ENCODE measurements at regions of chrX and their contacts with region 1.

Region 1: DNA sequence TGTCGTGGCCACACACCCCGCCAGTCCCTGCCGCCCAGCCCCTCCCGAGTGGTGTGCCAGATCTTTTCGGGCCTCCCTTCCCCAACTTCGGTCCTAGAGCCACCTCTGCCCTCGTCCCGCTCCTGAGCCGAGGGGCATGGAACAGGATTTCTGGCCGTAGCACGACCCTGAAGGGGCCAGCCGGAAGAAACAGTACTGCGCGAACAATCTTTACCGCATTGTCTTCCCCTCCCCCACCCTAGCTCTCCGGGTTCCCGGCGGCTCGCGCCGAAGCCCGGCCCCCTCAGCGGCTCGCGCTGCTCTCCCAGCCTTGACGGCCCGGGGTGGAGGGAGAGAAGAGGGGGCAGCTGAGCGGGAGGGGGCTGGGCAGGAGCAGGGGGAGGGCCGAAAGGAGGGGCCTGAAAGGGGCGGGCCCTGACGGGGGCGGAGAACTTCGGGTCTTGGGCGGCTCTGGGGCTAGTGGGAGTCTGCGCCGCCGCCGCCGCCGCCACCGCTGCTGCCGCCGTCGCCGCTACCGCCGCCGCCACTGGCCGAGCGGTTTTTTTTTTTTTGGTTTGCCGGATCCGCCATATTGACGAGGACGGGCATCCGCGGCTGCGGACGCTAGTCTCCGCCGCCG is at the start of gene USP9X:
- DNase-seq: peak; percentile 32
- ATAC-seq: peak; percentile 83
- H3K4me3 ChIP-seq: peak within 1 kb of the TSS; percentile 65 to 76
- H3K27ac ChIP-seq: peak within 1 kb of the TSS; percentile 81
- H3K4me1 ChIP-seq: peaks cover 9% of the 10 kb centered on the region
- H3K27me3 ChIP-seq: no peaks in the 10 kb centered on the region
- CTCF ChIP-seq: no peak
- total RNA-seq, gene USP9X: 44.4 TPM

Region 2: DNA sequence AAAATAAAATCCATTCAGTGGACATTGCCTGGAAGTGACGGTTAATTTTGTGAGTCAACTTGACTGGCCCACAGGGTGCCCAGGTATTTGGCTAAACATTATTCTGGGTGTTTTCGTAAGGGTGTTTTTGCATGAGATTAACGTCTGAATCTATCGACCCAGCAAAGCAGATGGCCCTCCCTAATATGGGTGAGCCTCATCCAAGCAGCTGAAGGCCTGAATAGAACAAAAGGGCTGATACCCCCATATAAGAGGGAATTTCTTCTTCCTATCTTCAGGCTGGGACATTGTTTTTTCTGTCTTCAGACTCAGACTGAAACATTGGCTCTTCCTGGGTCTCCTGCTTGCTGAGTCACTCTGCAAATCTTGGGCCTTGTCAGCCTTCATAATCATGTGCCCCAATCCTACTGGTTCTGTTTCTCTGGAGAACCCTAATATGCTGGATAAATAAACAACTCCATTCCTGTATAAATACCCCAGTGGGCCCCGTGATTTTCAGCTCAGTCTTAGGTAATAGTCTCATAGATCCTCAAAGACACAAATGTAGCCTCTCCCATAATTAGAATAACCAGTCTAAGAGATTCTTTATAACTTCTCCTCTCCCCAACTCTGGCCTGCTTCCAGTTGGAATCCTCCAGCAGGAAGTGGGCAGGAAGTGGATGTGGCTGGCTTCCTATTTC is 215.9 kb after region 1 on chrX:
- CTCF ChIA-PET with region 1: no interaction called
- POLR2A ChIA-PET with region 1: no interaction called
- in situ Hi-C with region 1: no loop called
- intact Hi-C with region 1: no loop called
- DNase-seq: no peak
- ATAC-seq: peak; percentile 47; the same call in 1 of the 2 replicates
- H3K4me3 ChIP-seq: no peak overlapping the region
- H3K27ac ChIP-seq: peak overlapping the region; percentile 74
- H3K4me1 ChIP-seq: peaks cover 9% of the 10 kb centered on the region
- H3K27me3 ChIP-seq: no peaks in the 10 kb centered on the region
- CTCF ChIP-seq: no peak

Region 3: DNA sequence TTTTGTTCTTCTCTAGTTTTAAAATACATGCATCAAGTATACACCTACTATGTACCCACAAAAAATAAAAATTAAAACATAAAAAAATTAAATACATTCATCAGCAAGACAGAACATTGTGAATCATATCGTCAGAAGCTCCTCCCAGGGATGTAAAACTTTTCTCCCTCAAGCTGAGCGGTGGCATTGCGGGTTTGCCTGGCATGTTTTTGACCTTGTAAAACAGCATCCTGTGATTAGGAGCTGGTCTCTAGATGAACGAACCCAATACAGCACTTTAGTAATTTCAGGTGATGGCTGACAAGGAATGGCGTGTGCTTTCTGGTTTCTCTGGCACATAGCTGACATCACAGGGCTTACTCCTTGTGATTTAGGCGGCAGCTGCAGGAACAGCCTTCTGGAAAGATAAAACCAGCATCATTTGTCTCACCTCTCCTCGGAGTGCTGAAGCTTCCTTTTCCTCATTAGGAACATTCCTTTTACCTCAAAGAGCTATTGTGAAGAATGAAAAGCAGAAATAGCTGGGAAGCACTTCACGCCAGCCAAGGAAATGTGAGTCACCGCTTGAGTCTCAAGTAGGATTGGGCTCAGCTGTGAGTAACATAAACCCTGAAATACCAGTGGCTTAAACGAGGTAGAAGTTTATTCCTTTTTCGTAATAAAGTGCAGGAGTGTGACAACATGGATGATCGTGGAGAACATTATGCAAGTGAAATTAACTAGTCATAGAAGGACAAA is 406.4 kb after region 1 on chrX:
- CTCF ChIA-PET with region 1: no interaction called
- POLR2A ChIA-PET with region 1: interaction called, 12 read pairs
- in situ Hi-C with region 1: no loop called
- intact Hi-C with region 1: no loop called
- DNase-seq: peak; percentile 22
- ATAC-seq: peak; percentile 82
- H3K4me3 ChIP-seq: peak overlapping the region; percentile 27 to 48
- H3K27ac ChIP-seq: peak overlapping the region; percentile 68
- H3K4me1 ChIP-seq: no peaks in the 10 kb centered on the region; the same call in 1 of the 2 replicates
- H3K27me3 ChIP-seq: no peaks in the 10 kb centered on the region
- CTCF ChIP-seq: no peak

Measured in Panc1 (cell line).